Natural killer cell (primary cell): ENCODE measurements at regions of chr1 and their contacts with region 1.

Region 1: DNA sequence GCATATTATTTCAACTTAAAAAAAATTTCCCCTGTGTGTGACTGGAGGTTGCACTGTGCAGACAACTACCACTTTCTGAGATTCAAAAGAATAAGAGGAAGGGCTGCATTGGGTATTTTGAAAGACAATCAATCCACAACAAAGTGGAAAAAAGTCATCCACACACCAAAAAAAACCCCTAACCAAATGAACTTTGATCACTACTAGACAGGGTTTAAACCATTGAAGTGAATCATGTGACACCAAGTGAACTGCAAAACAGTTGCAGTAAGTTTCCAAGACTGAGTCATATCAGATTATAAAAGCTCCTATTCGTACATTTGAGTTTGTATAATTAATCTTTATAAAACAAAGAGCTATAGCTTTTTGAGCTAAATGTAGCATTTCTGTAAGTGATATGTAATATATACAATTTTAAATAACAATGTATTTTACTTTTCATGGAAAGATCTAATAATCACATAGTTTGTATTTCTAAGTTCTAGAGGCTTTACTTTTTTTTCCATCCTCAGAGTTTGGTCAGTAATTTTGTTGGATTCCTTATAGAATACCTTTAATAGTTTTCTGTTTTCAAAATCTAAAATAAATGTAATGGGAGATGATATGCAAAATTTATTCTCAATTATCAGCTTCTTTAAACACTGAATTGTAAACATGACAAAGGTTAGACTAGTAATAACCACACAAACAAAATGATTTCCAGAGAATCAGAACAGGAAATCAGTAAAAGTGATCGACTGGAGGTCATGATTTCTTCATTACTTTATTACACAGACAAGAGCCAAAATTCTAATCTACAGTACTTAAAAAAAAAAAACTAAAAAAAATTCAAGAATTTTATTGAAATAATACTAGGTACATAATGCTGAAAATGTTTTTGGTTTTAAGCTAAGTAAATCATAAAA is 50.5 kb upstream of the GFI1 start:
- DNase-seq: peak in 1 of 2 donors; percentile 83
- ATAC-seq: peak; percentile 57 to 66 (median 63)
- H3K4me3 ChIP-seq: peak overlapping the region; percentile 19
- H3K4me3 Mint-ChIP-seq: peak overlapping the region; percentile 68
- H3K27ac ChIP-seq: peak overlapping the region; percentile 87
- H3K27ac Mint-ChIP-seq: peak overlapping the region; percentile 91 to 92
- H3K4me1 ChIP-seq: peaks cover 11% of the 10 kb centered on the region
- H3K4me1 Mint-ChIP-seq: peaks cover 24 to 26% of the 10 kb centered on the region in 2 donors
- H3K27me3 ChIP-seq: no peaks in the 10 kb centered on the region
- H3K27me3 Mint-ChIP-seq: no peaks in the 10 kb centered on the region
- CTCF ChIP-seq: no peak

Region 2: DNA sequence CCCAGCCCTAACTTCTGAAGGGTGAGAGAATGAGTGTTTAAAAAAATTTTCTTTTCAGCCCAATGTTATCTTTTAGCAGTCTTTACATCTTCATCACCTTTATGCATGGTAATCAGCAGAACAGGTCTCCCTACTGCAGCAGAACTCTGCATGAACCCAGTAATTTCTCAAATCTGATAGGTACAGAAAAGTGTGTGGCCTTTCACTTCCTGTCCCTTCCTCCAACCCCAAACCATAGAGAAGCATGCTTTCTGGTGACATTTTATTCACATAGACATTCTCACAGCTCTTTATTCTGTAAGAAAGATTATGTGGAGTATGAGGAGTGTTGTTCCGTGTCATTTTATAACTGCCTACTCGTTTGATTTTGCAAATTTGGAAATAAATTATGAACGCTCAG is 169.7 kb before region 1 on chr1:
- intact Hi-C with region 1: loop called (anchors 5 kb)
- DNase-seq: peak in 1 of 2 donors; percentile 21
- ATAC-seq: peak; percentile 44 to 52 (median 48)
- H3K4me3 ChIP-seq: no peak overlapping the region
- H3K4me3 Mint-ChIP-seq: peak overlapping the region; percentile 21
- H3K27ac ChIP-seq: no peak overlapping the region
- H3K27ac Mint-ChIP-seq: peak overlapping the region; percentile 46 to 74
- H3K4me1 ChIP-seq: peaks cover 11% of the 10 kb centered on the region
- H3K4me1 Mint-ChIP-seq: peaks cover 40 to 41% of the 10 kb centered on the region in 2 donors
- H3K27me3 ChIP-seq: no peaks in the 10 kb centered on the region
- H3K27me3 Mint-ChIP-seq: no peaks in the 10 kb centered on the region
- CTCF ChIP-seq: no peak

Region 3: DNA sequence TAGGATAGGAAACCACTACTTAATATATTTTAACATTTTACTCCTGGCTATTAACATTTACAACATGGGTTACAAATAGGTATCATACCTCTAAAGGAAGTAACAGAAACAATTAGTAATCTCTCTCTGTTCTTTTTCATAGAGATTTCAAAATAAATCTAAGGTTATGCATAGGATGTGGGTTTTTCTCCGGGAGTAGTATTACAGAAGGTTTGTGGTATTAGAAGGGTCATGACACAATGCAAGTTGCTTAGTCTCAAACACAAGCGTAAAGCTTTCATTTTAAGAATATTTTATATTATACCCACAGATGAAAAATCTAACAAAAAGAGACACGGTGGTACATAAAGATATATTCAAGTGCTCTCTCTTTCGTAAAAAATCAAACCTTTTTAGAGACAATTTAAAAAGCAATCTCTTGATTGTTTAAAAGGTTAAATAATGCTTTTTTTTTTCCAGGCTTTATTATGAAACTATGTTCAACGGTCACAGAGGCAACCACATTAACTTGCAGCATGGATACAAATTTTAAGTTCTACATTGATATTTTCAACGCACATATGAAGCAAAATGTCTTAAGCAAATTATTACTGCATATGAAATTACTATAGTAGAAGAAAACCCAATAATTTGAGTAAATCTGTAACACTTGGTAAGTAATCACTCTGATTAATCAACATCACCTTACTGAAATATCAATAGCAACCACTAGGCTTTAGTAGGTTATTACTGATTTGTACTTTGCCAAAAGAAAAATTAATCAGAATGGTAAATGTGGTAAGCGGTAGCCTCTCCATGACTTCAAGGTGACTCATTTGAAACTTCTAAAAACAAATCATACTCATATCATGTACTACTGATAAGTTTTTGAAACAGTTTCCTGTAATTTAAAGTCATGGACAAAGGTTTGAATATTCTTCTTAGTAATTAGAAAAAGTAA is 46.9 kb after region 1 on chr1:
- intact Hi-C with region 1: loop called (anchors 1 kb)
- DNase-seq: peak in 1 of 2 donors; percentile 70
- ATAC-seq: peak; percentile 85 to 96 (median 89)
- H3K4me3 ChIP-seq: peak overlapping the region; percentile 10
- H3K4me3 Mint-ChIP-seq: peak overlapping the region; percentile 76
- H3K27ac ChIP-seq: peak overlapping the region; percentile 64
- H3K27ac Mint-ChIP-seq: peak overlapping the region; percentile 86 to 88
- H3K4me1 ChIP-seq: peaks cover 12% of the 10 kb centered on the region
- H3K4me1 Mint-ChIP-seq: peaks cover 20% of the 10 kb centered on the region in 2 donors
- H3K27me3 ChIP-seq: no peaks in the 10 kb centered on the region
- H3K27me3 Mint-ChIP-seq: no peaks in the 10 kb centered on the region
- CTCF ChIP-seq: no peak

Region 4: GRCh38 chr1:92843429-92844352 is 306.5 kb after region 1 on chr1:
- intact Hi-C with region 1: no loop called
- DNase-seq: no peak
- ATAC-seq: no peak
- H3K4me3 ChIP-seq: no peak overlapping the region
- H3K4me3 Mint-ChIP-seq: no peak overlapping the region
- H3K27ac ChIP-seq: no peak overlapping the region
- H3K27ac Mint-ChIP-seq: peak overlapping the region; percentile 67 to 68
- H3K4me1 ChIP-seq: peaks cover 9% of the 10 kb centered on the region
- H3K4me1 Mint-ChIP-seq: peaks cover 25% of the 10 kb centered on the region in 2 donors
- H3K27me3 ChIP-seq: no peaks in the 10 kb centered on the region
- H3K27me3 Mint-ChIP-seq: no peaks in the 10 kb centered on the region
- CTCF ChIP-seq: no peak